Panc1 (cell line): ENCODE measurements at regions of chr7 and their contacts with region 1.

Region 1: GRCh38 chr7:138738551-138739335 is 37.6 kb upstream of the SVOPL start:
- DNase-seq: peak; percentile 92
- ATAC-seq: peak; percentile 94
- H3K4me3 ChIP-seq: no peak overlapping the region
- H3K27ac ChIP-seq: no peak overlapping the region
- H3K4me1 ChIP-seq: no peaks in the 10 kb centered on the region
- H3K27me3 ChIP-seq: no peaks in the 10 kb centered on the region
- CTCF ChIP-seq: peak; percentile 94

Region 2: GRCh38 chr7:137898839-137899721 is 839.7 kb before region 1 on chr7:
- CTCF ChIA-PET with region 1: interaction called, 3 read pairs
- POLR2A ChIA-PET with region 1: no interaction called
- in situ Hi-C with region 1: no loop called
- intact Hi-C with region 1: loop called (anchors 5 kb)
- DNase-seq: peak; percentile 59
- ATAC-seq: peak; percentile 98
- H3K4me3 ChIP-seq: peak overlapping the region in 1 of 2 experiments; percentile 15; a peak in 1 of 4 replicates
- H3K27ac ChIP-seq: no peak overlapping the region
- H3K4me1 ChIP-seq: peaks cover 5% of the 10 kb centered on the region; the same call in 1 of the 2 replicates
- H3K27me3 ChIP-seq: no peaks in the 10 kb centered on the region
- CTCF ChIP-seq: peak; percentile 95

Region 3: GRCh38 chr7:138002096-138002827 is 736.5 kb before region 1 on chr7:
- CTCF ChIA-PET with region 1: no interaction called
- POLR2A ChIA-PET with region 1: no interaction called
- in situ Hi-C with region 1: no loop called
- intact Hi-C with region 1: loop called (anchors 5 kb)
- DNase-seq: peak; percentile 99
- ATAC-seq: peak; percentile 98
- H3K4me3 ChIP-seq: peak overlapping the region; percentile 83 to 93
- H3K27ac ChIP-seq: peak overlapping the region; percentile 76
- H3K4me1 ChIP-seq: peaks cover 10% of the 10 kb centered on the region
- H3K27me3 ChIP-seq: no peaks in the 10 kb centered on the region
- CTCF ChIP-seq: peak; percentile 96

Region 4: DNA sequence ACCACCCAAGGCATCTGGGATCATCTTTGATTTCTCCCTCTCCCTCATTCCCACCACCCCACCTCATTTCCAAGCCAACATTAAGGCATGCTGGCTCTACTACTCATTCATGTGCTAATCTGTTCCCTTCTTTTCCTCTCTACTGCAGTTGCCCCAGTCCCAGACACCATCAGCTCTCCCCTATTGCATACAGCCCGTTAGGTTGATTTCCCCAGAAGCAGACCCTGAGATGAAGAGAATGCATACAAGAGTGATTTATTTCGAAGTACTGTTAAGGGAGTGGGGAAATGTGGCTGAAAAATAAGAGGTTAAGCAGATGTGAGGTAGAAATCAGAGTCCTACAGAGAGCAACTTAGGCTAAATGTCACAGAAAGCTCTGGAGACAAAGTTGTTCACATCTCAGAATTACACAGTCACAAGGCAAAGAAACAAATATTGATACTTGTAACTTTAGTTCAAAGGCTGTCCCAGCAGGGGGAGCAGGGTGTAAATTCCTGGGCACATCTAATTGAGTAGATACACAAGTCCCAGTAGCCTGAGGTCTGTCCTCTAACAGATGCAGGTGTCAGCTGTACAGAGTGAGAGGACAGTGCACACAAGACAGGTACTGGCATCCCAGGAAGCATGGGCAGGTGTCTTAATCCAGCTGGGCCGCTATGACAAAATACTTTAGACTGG is 641.5 kb before region 1 on chr7:
- CTCF ChIA-PET with region 1: no interaction called
- POLR2A ChIA-PET with region 1: no interaction called
- in situ Hi-C with region 1: no loop called
- intact Hi-C with region 1: loop called (anchors 5 kb)
- DNase-seq: no peak
- ATAC-seq: 0 out of 2 replicates have a peak, but pooled peaks have one; percentile 66
- H3K4me3 ChIP-seq: no peak overlapping the region
- H3K27ac ChIP-seq: no peak overlapping the region
- H3K4me1 ChIP-seq: no peaks in the 10 kb centered on the region
- H3K27me3 ChIP-seq: no peaks in the 10 kb centered on the region
- CTCF ChIP-seq: peak; percentile 47

Region 5: DNA sequence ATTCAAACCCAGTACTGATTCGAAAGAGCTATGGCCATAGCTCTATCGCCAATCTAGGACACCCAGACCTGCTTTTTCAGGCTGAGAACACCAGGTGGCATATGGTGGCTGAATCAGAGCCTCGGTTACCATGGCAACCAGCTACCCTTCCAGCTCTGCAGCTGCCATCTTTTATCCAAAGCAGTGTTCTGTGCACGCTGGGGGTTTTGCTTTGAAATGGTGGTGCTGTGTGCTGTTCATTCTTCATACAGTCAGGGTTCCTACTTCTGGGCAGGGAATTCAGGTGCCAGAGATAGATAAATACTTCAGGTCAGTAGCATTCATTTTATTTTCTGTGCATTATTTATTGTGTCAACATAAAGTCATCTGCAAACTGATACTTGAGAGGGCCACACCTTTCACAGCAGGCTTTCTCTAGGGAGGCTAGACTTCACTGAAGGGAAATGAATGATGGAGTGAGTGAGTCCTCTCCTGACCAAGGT is 577.1 kb before region 1 on chr7:
- CTCF ChIA-PET with region 1: interaction called, 7 read pairs
- POLR2A ChIA-PET with region 1: interaction called, 3 read pairs
- in situ Hi-C with region 1: no loop called
- intact Hi-C with region 1: loop called (anchors 1 kb)
- DNase-seq: peak; percentile 61
- ATAC-seq: peak; percentile 89
- H3K4me3 ChIP-seq: no peak overlapping the region
- H3K27ac ChIP-seq: no peak overlapping the region
- H3K4me1 ChIP-seq: no peaks in the 10 kb centered on the region
- H3K27me3 ChIP-seq: no peaks in the 10 kb centered on the region
- CTCF ChIP-seq: peak; percentile 72

Region 6: DNA sequence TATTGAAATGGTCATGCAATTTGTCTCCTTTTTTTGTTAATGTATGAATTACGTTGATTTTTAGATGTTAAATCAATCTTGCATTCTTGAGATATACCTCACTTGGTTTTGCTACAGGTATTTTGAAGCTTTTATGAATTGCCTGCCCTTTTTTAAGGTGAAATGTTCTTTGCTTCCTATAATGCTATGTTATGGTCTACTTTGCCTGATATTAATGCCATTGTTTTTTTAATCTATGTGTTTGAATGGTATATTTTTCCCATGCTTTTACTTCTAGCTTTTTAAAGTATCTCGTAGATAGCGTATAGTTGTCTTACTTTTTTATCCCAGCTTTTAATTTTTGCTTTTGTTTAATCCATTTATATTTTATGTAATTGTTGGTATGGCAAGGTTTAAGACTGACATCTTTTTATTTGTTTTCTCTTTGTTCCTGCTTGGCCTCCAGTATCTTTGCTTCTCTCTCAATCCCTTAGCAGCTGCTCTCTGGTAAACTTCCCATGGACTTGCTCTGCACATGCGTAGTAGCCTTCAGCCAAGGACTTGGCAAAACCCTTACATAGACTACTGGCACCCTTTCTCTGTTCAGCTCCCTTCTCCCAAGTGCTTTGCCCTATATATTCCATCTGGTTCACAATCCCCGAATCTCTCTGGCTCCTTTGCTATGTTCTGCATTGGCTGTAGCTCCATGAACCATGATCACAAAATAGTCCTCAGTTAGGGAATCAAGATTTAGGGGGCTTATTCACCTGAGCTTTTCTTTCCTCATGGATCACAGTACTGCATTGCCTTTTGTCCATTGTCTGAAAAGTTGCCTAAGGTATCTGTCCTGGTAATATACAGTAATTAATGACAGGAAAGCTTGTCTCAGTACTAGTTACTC is 270.3 kb before region 1 on chr7:
- CTCF ChIA-PET with region 1: no interaction called
- POLR2A ChIA-PET with region 1: no interaction called
- in situ Hi-C with region 1: no loop called
- intact Hi-C with region 1: loop called (anchors 5 kb)
- DNase-seq: no peak
- ATAC-seq: no peak
- H3K4me3 ChIP-seq: no peak overlapping the region
- H3K27ac ChIP-seq: no peak overlapping the region; the same call in 1 of the 2 replicates
- H3K4me1 ChIP-seq: 0 out of 2 replicates have a peak, but pooled peaks cover 2% of the 10 kb centered on the region
- H3K27me3 ChIP-seq: no peaks in the 10 kb centered on the region
- CTCF ChIP-seq: no peak

Region 7: DNA sequence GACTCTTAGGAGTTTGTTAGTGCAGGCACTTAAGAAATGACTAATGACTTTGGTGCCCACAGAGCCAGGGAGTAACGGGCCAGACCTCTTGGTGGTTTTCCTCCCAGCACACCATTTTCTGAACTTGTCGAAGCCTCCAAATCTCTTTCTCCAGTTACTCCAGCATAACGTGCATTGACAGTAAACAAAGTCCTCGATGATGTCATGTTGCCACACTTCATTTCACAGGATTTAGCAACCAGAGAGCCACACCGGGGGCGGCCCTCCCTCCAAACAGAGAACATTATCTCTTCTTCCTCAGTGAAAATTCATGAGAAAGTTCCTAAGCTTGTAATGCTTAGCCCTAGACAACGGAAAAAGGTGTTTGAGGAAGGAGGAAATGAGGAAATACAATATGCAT is 33.6 kb before region 1 on chr7:
- CTCF ChIA-PET with region 1: no interaction called
- POLR2A ChIA-PET with region 1: interaction called, 12 read pairs
- in situ Hi-C with region 1: no loop called
- intact Hi-C with region 1: no loop called
- DNase-seq: no peak
- ATAC-seq: no peak
- H3K4me3 ChIP-seq: no peak overlapping the region
- H3K27ac ChIP-seq: no peak overlapping the region
- H3K4me1 ChIP-seq: no peaks in the 10 kb centered on the region
- H3K27me3 ChIP-seq: no peaks in the 10 kb centered on the region
- CTCF ChIP-seq: no peak